ENCODE measurements at regions of chr19 and their contacts with region 1.

Region 1: GRCh38 chr19:12610540-12611360 is at the starts of genes ZNF490 and ZNF791:
- DNase-seq: peak; percentile 97
- ATAC-seq: peak; percentile 73
- H3K4me3 ChIP-seq: peak within 1 kb of the TSS; percentile 89 to 99 (median 98)
- H3K4me3 Mint-ChIP-seq: peak within 1 kb of the TSS; percentile 100
- H3K27ac ChIP-seq: peak within 1 kb of the TSS; percentile 93 to 96
- H3K27ac Mint-ChIP-seq: peak within 1 kb of the TSS; percentile 100
- H3K4me1 ChIP-seq: peaks cover 50 to 72% of the 10 kb centered on the region in 2 donors
- H3K4me1 Mint-ChIP-seq: peaks cover 54% of the 10 kb centered on the region
- H3K27me3 ChIP-seq: no peaks in the 10 kb centered on the region
- H3K27me3 Mint-ChIP-seq: no peaks in the 10 kb centered on the region
- CTCF ChIP-seq: no peak
- total RNA-seq, gene ZNF490: 19.9 and 21.2 TPM in 2 replicates
- total RNA-seq, gene ZNF791: 56.0 and 57.9 TPM in 2 replicates

Region 2: DNA sequence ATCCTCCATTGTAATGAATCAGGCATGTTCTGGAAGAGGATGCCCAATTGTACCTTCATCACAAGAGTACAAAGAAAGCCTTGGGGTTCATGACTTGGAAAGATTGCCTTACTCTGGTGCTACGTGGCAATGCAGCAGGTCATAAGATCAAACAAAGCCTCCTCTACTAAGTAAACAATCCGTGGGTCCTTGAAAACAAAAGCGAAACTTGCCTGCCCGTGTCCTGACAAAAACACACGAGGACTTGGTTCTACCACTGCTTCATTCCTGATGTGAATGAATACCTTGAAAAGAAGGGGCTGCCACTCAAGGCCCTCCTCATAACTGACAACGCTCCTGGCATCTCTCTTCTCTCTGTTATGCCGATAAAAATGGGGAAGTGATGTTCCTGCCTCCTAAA is 296.2 kb before region 1 on chr19:
- CTCF ChIA-PET with region 1: no interaction called
- POLR2A ChIA-PET with region 1: no interaction called
- intact Hi-C with region 1: no loop called
- DNase-seq: no peak
- ATAC-seq: no peak
- H3K4me3 ChIP-seq: no peak overlapping the region
- H3K4me3 Mint-ChIP-seq: no peak overlapping the region
- H3K27ac ChIP-seq: no peak overlapping the region
- H3K27ac Mint-ChIP-seq: no peak overlapping the region
- H3K4me1 ChIP-seq: no peaks in the 10 kb centered on the region
- H3K4me1 Mint-ChIP-seq: no peaks in the 10 kb centered on the region
- H3K27me3 ChIP-seq: no peaks in the 10 kb centered on the region
- H3K27me3 Mint-ChIP-seq: no peaks in the 10 kb centered on the region
- CTCF ChIP-seq: no peak

Region 3: GRCh38 chr19:12564016-12564664 is 46.6 kb before region 1 on chr19:
- CTCF ChIA-PET with region 1: interaction called, 13 read pairs
- POLR2A ChIA-PET with region 1: no interaction called
- intact Hi-C with region 1: loop called (anchors 2 kb)
- DNase-seq: peak; percentile 91
- ATAC-seq: peak; percentile 100
- H3K4me3 ChIP-seq: no peak overlapping the region
- H3K4me3 Mint-ChIP-seq: peak overlapping the region; percentile 27
- H3K27ac ChIP-seq: no peak overlapping the region
- H3K27ac Mint-ChIP-seq: peak overlapping the region; percentile 46
- H3K4me1 ChIP-seq: peaks cover 0 to 7% of the 10 kb centered on the region in 2 donors
- H3K4me1 Mint-ChIP-seq: peaks cover 6% of the 10 kb centered on the region
- H3K27me3 ChIP-seq: no peaks in the 10 kb centered on the region
- H3K27me3 Mint-ChIP-seq: no peaks in the 10 kb centered on the region
- CTCF ChIP-seq: peak; percentile 96

Region 4: GRCh38 chr19:12628040-12629022 is 17.6 kb after region 1 on chr19:
- CTCF ChIA-PET with region 1: interaction called, 10 read pairs
- POLR2A ChIA-PET with region 1: interaction called, 4 read pairs
- intact Hi-C with region 1: no loop called
- DNase-seq: no peak
- ATAC-seq: no peak
- H3K4me3 ChIP-seq: no peak overlapping the region
- H3K4me3 Mint-ChIP-seq: no peak overlapping the region
- H3K27ac ChIP-seq: no peak overlapping the region
- H3K27ac Mint-ChIP-seq: no peak overlapping the region
- H3K4me1 ChIP-seq: no peaks in the 10 kb centered on the region
- H3K4me1 Mint-ChIP-seq: peaks cover 3% of the 10 kb centered on the region
- H3K27me3 ChIP-seq: no peaks in the 10 kb centered on the region
- H3K27me3 Mint-ChIP-seq: no peaks in the 10 kb centered on the region
- CTCF ChIP-seq: no peak

Region 5: DNA sequence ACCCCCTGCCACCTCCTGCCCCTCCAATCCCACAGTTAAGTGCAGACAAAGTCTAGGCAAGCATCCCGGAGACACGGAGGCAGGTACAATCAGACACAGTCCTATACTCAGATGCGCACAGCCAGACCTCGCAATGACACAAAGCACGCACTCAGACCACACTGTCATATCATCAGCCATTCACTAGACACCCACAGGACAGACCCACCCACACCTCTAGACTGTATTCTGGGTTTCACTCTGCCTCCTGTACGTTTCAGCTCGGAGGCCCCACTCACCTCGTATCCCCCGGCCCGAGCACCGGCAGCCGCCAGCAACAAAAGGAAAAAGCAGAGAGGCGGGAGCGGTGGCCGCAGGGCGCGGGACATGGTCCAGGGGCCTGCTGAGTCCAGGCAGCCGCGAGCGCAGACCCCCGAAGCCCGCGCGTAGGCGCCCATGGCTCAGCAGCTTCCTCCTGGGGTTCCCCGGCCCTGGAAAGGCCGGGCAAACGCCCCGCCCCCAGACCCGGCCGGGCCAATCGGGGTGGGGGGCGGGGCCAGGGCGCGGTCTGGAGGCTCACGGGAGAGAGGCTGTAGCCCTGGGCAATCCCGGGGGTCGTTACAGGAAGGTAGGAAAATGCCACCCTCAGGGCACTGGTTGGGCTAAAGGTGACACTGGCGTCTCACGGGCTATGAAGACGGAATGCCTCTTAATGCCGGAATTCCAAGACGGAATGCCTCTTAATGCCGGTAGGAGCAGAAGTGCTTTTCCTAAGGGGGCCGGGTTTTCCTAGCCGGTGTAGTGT is 55.7 kb after region 1 on chr19 and contains the starts of genes MAN2B1 and WDR83:
- CTCF ChIA-PET with region 1: interaction called, 14 read pairs
- POLR2A ChIA-PET with region 1: interaction called, 16 read pairs
- intact Hi-C with region 1: loop called (anchors 1 kb)
- DNase-seq: peak; percentile 91
- ATAC-seq: peak; percentile 71
- H3K4me3 ChIP-seq: peak within 1 kb of the TSS; percentile 84 to 99 (median 94)
- H3K4me3 Mint-ChIP-seq: peak within 1 kb of the TSS; percentile 98
- H3K27ac ChIP-seq: peak within 1 kb of the TSS; percentile 95 to 99
- H3K27ac Mint-ChIP-seq: peak within 1 kb of the TSS; percentile 97
- H3K4me1 ChIP-seq: peaks cover 37 to 60% of the 10 kb centered on the region in 2 donors
- H3K4me1 Mint-ChIP-seq: peaks cover 67% of the 10 kb centered on the region
- H3K27me3 ChIP-seq: no peaks in the 10 kb centered on the region
- H3K27me3 Mint-ChIP-seq: no peaks in the 10 kb centered on the region
- CTCF ChIP-seq: no peak
- total RNA-seq, gene MAN2B1: 252 and 256 TPM in 2 replicates
- total RNA-seq, gene WDR83: 24.6 and 25.8 TPM in 2 replicates

Region 6: DNA sequence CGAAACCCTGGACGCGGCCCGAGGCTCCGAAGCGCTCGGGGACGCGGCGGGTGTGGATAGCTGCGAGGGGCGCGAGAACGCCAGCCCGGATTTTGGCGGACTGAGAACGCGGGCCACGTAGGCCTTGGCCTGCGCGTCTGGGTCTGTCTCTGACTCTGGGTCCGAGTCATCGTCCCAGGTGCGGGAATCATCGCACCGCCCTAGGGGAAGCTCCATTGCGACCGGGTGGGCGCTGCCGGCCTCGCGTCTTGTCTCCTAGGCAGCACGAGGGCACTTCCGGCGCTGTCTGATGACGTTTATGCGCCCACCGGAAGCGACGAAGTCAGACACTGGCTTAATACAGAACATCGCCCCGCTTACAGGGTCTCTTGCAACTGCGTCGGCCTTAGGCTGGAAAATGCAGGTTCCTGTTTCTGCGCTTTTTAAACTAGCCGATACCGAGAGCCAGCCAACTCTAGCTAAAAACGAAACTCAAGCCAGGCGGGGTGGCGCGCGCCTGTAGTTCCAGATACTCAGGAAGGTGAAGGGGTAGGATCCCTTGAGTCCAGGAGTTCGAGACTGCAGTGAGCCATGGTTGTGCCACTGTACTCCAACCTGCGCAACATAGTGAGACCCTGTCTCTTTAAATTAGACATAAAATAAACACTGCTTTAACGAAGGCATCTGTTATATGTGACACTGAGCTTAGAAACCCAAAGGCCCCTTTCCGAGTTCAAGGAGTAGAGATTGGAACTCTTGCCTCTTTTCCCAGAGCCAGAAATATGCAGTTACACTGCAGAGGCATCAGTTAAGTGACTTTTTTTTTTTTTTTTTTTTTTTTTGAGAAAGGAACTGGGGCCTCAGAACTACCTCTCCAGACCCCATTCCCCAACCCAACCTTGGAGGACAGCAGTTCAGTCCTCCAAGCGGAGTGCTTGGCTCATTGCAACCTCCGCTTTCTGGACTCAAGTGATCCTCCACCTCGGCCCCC is 85.9 kb after region 1 on chr19 and contains the start of gene FBXW9:
- CTCF ChIA-PET with region 1: no interaction called
- POLR2A ChIA-PET with region 1: interaction called, 13 read pairs
- intact Hi-C with region 1: no loop called
- DNase-seq: peak; percentile 98
- ATAC-seq: peak; percentile 87
- H3K4me3 ChIP-seq: peak within 1 kb of the TSS; percentile 64 to 88 (median 82)
- H3K4me3 Mint-ChIP-seq: peak within 1 kb of the TSS; percentile 94
- H3K27ac ChIP-seq: peak within 1 kb of the TSS; percentile 85 to 93
- H3K27ac Mint-ChIP-seq: peak within 1 kb of the TSS; percentile 98
- H3K4me1 ChIP-seq: peaks cover 13 to 17% of the 10 kb centered on the region in 2 donors
- H3K4me1 Mint-ChIP-seq: peaks cover 10% of the 10 kb centered on the region
- H3K27me3 ChIP-seq: no peaks in the 10 kb centered on the region
- H3K27me3 Mint-ChIP-seq: no peaks in the 10 kb centered on the region
- CTCF ChIP-seq: no peak
- total RNA-seq, gene FBXW9: 4.7 and 5.2 TPM in 2 replicates

Region 7: DNA sequence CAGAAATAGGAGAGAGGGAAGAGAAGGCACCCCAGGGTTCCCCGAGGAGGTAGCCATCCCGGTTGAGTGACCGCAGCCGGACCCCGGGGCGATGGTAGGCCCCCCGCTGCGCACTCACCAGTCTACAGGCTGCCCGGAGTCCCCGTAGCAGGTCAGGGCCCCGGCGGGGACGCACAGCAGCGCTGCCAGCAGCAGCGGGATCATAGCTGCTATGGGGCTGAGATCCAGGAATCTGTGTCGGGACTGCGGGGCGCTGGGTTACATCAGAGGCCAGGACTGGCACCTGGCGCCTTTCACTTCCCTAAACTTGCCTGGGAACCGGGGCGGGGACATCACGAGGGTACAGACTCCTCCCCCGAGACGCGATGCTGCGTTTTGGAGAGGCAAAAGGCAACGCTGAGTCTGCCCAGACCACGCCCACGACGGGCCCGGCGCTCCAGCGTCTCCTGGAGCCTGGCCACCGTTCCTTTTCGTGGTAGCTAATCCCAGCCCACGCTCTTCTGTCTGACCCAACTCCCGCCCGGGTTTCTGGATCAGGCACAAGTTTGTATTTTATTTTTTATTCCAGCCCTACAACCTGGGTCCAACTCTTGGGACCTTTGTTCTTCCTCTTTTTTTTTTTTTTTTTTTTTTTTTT is 270.5 kb after region 1 on chr19 and contains the start of gene DNASE2:
- CTCF ChIA-PET with region 1: no interaction called
- POLR2A ChIA-PET with region 1: interaction called, 15 read pairs
- intact Hi-C with region 1: no loop called
- DNase-seq: peak; percentile 98
- ATAC-seq: peak; percentile 88
- H3K4me3 ChIP-seq: peak within 1 kb of the TSS; percentile 58 to 97 (median 83)
- H3K4me3 Mint-ChIP-seq: peak within 1 kb of the TSS; percentile 84
- H3K27ac ChIP-seq: peak within 1 kb of the TSS; percentile 94 to 98
- H3K27ac Mint-ChIP-seq: peak within 1 kb of the TSS; percentile 96
- H3K4me1 ChIP-seq: peaks cover 19 to 41% of the 10 kb centered on the region in 2 donors
- H3K4me1 Mint-ChIP-seq: peaks cover 27% of the 10 kb centered on the region
- H3K27me3 ChIP-seq: no peaks in the 10 kb centered on the region
- H3K27me3 Mint-ChIP-seq: no peaks in the 10 kb centered on the region
- CTCF ChIP-seq: no peak
- total RNA-seq, gene DNASE2: 26.6 and 30.8 TPM in 2 replicates

Measured in B cell (primary cell).